T-cell (primary cell): ENCODE measurements at regions of chr6 and their contacts with region 1.

Region 1: GRCh38 chr6:150417899-150418826 is 49.4 kb downstream of the IYD start:
- DNase-seq: peak in 14 of 35 experiments; percentile 6 to 71 (median 14)
- ATAC-seq: peak in 3 of 4 experiments; percentile 49 to 72 (median 61)
- H3K4me3 ChIP-seq: peak overlapping the region; percentile 48 to 81
- H3K4me3 Mint-ChIP-seq: peak overlapping the region; percentile 69 to 79 (median 78)
- H3K27ac ChIP-seq: no peak overlapping the region
- H3K27ac Mint-ChIP-seq: no peak overlapping the region
- H3K4me1 ChIP-seq: peaks cover 0 to 6% of the 10 kb centered on the region in 2 experiments
- H3K4me1 Mint-ChIP-seq: peaks cover 7 to 16% (median 15%) of the 10 kb centered on the region in 3 donors
- H3K27me3 ChIP-seq: peaks cover 0 to 6% of the 10 kb centered on the region in 2 experiments
- H3K27me3 Mint-ChIP-seq: peaks cover 20 to 29% of the 10 kb centered on the region in 2 donors

Region 2: DNA sequence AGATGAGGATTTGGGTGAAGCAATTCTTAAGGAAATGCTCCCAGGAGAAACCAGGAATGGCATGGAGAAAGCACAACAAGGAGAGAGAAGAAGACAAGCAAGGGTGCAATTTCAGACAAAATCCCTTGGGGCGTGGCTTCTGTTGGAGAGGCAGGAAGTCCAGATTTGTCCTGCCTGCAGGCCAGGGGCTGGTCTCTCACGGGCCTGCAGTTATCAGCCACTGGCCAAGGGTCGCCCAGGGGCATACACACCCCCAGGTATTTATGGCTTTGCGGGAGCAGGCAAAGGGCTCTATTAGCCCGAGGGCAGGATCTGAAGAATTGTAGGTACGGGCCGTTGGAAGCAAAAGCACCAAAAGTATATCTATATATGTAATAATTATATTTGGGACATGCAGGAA is 38.3 kb after region 1 on chr6:
- CTCF ChIA-PET with region 1: interaction called in 1 of 2 experiments, 11 read pairs
- POLR2A ChIA-PET with region 1: no interaction called
- DNase-seq: no peak
- ATAC-seq: no peak
- H3K4me3 ChIP-seq: no peak overlapping the region
- H3K4me3 Mint-ChIP-seq: no peak overlapping the region
- H3K27ac ChIP-seq: no peak overlapping the region
- H3K27ac Mint-ChIP-seq: no peak overlapping the region
- H3K4me1 ChIP-seq: no peaks in the 10 kb centered on the region
- H3K4me1 Mint-ChIP-seq: no peaks in the 10 kb centered on the region
- H3K27me3 ChIP-seq: peaks cover 0 to 6% of the 10 kb centered on the region in 2 experiments
- H3K27me3 Mint-ChIP-seq: peaks cover 3 to 4% of the 10 kb centered on the region in 2 donors

Region 3: DNA sequence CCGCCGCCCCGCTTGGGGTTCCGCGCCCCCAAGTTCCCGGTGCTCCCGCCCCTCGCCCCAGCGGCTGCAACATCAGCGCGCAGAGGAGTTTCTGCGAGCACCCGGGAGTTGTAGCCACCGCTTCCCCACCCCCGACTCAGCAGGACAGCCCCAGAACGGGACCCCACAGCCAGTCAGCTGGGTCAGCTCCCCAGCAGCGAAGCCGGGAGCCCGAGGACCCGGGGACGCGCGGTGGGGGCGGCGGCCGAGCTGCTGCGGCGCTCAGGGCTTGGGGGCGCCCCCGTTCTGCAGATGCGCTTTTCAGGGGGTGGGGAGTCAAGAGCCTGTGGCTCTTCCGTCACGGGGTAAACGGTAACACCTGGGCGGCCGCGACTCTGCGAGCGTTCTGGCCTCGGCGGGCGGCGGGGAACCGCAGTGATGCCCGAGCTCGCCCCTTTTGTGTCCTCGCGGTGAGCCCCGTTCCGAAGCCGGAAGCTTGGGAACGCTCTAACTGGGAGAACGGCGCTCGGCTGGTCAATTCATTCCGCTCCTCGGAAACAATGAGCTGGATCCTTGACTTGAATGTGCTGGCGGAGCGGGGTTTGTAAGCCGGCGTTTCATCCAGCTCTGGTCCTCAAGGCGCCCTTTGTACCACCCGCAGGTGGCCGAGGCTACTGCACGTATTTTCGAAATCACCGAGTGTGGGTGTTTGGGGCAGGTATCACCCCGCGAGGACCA is 182.3 kb after region 1 on chr6:
- CTCF ChIA-PET with region 1: interaction called in 1 of 2 experiments, 10 read pairs
- POLR2A ChIA-PET with region 1: no interaction called
- DNase-seq: peak; percentile 13 to 73 (median 44)
- ATAC-seq: peak; percentile 57 to 77 (median 64)
- H3K4me3 ChIP-seq: peak overlapping the region; percentile 62 to 70
- H3K4me3 Mint-ChIP-seq: peak overlapping the region; percentile 89 to 91 (median 90)
- H3K27ac ChIP-seq: peak overlapping the region; percentile 50
- H3K27ac Mint-ChIP-seq: peak overlapping the region; percentile 69 to 85
- H3K4me1 ChIP-seq: peaks cover 0 to 16% of the 10 kb centered on the region in 2 experiments
- H3K4me1 Mint-ChIP-seq: peaks cover 17 to 25% (median 20%) of the 10 kb centered on the region in 3 donors
- H3K27me3 ChIP-seq: peaks cover 0 to 11% of the 10 kb centered on the region in 2 experiments
- H3K27me3 Mint-ChIP-seq: peaks cover 27 to 31% of the 10 kb centered on the region in 2 donors

Region 4: DNA sequence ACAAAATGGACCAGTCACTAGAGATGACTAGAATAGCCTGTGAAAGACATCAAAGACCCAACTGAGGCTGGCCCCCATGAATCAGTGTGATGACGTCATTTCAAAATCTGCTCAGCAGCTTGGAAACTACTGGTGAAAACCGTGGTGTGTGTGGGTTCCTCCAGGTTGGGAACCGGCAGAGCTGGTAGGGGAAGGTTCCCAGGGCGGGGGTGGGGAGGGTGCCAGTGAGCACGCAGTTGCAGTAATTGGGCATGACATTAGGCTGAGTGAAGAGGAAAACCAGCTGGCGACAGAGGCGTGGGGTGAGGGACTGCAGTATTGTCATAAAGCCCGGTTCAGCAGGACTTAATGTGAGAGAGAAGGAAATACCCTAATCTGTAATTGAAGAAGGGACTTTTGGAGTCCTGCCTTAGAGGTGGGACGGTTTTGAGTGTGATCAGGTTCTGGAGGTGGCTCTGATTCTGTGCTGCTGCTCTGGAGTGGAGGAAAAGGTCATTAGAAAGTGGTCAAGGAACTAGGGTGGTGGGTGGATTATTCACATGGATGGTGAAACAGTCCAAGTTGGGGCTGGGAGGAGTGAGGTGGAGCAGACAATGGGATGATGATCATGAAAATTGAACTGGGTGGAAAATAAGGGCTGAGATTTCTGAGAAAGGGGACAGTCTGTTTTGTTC is 395.3 kb after region 1 on chr6:
- CTCF ChIA-PET with region 1: interaction called, 46 to 68 read pairs
- POLR2A ChIA-PET with region 1: no interaction called
- DNase-seq: peak in 3 of 35 experiments; percentile 1 to 37 (median 3)
- ATAC-seq: peak in 1 of 4 experiments; percentile 20
- H3K4me3 ChIP-seq: no peak overlapping the region
- H3K4me3 Mint-ChIP-seq: no peak overlapping the region
- H3K27ac ChIP-seq: no peak overlapping the region
- H3K27ac Mint-ChIP-seq: peak overlapping the region in 1 of 2 donors; percentile 44
- H3K4me1 ChIP-seq: no peaks in the 10 kb centered on the region
- H3K4me1 Mint-ChIP-seq: peaks cover 4 to 13% (median 6%) of the 10 kb centered on the region in 3 donors
- H3K27me3 ChIP-seq: peaks cover 0 to 8% of the 10 kb centered on the region in 2 experiments
- H3K27me3 Mint-ChIP-seq: peaks cover 5 to 10% of the 10 kb centered on the region in 2 donors